ENCODE measurements at regions of chrX and their contacts with region 1.

Region 1: DNA sequence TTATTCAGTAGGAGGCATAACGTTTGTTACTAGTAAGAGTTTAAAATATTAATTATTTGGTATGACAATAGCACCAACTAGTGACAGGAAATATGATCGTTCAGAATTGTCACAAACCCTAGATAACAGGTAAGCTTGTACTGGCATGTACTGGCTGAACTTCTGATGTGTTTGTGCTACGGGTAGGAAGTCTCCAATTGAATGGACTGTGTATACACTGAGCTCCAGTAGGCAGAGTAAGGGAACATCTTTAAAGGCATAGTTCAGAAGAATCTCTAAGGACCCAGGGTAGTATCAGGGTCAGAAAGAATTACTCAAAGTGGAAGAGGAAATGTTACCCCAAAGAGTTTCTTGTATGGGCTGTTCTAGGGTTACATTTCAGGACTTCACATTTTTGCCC is 230.4 kb downstream of the EDA2R start:
- DNase-seq: no peak
- H3K4me3 Mint-ChIP-seq: no peak overlapping the region
- H3K27ac Mint-ChIP-seq: no peak overlapping the region
- H3K4me1 Mint-ChIP-seq: peaks cover 2% of the 10 kb centered on the region
- H3K27me3 Mint-ChIP-seq: no peaks in the 10 kb centered on the region

Region 2: DNA sequence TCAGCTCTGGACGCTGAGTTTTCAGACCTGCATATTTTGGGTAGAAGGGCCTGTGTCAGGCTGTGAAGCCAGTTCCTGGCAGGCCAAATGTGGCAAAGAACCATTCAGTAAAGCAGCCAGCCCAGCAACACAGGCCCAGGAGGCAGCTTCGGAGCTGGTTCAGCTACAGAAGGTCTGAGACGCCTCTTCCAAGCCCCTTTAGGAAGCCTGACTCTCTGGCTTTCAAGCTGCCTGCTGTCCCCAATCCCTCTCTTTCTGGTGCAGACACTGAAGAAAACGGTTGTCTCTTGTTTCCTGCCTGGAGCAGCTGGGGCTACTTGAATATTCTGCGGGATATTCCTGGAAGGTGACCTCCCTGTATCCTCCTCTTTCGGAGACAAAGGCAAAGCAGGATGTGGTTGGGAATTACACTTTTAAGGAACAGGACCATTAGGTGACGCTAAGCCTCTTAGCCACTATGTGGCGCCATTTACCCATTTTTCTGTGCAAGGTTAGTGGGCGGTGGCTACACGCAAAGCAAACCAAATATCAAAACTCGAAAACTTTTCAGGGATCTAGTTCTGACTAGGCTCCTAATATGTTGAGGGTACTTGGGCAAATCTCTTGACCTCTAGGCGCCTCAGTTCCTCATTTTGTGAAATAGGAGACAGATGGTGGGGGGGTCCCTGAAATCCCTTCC is 826.7 kb before region 1 on chrX:
- CTCF ChIA-PET with region 1: interaction called, 3 read pairs
- intact Hi-C with region 1: loop called (anchors 1 kb)
- DNase-seq: peak; percentile 69
- H3K4me3 Mint-ChIP-seq: no peak overlapping the region
- H3K27ac Mint-ChIP-seq: no peak overlapping the region
- H3K4me1 Mint-ChIP-seq: peaks cover 6% of the 10 kb centered on the region
- H3K27me3 Mint-ChIP-seq: no peaks in the 10 kb centered on the region

Region 3: DNA sequence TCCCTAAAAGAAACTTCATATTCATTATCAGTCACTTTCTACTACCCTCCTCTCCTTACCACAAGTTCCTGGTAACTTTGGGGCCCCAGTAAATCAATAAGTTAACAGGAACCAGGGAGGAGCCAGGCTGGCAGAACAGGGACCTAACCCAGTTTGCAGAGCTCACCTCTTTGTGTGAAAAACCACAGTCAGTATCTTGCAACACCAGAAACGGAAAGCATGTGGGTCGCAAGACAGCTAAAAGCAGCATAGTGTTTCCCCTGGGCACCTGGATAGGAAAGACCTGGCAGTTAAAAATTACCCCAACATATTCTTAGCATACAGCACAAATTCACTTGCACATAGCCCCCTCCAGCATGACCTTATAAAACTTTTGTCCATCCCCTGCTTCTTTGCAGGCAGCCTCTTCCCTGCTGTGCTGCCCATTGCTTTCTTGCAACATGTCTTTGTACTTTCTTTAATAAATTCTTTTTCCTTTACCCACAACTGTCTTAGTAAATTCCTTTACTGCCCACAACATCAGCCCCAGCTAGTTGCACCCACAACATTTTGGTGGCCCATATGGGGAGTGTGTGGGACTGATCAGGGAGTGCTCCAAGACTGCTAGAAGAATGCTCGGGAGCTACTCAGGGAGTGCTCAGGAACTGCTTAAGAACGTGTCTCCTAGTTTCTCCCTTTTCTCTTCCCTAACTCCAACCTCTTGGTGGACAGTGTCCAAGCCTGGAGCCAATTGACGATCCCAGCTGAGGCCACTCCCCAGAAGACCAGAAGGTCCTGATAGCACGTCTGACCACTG is 657.6 kb before region 1 on chrX:
- CTCF ChIA-PET with region 1: no interaction called
- intact Hi-C with region 1: loop called (anchors 5 kb)
- DNase-seq: peak; percentile 60
- H3K4me3 Mint-ChIP-seq: peak overlapping the region; percentile 4
- H3K27ac Mint-ChIP-seq: peak overlapping the region; percentile 30
- H3K4me1 Mint-ChIP-seq: peaks cover 56% of the 10 kb centered on the region
- H3K27me3 Mint-ChIP-seq: no peaks in the 10 kb centered on the region

Region 4: DNA sequence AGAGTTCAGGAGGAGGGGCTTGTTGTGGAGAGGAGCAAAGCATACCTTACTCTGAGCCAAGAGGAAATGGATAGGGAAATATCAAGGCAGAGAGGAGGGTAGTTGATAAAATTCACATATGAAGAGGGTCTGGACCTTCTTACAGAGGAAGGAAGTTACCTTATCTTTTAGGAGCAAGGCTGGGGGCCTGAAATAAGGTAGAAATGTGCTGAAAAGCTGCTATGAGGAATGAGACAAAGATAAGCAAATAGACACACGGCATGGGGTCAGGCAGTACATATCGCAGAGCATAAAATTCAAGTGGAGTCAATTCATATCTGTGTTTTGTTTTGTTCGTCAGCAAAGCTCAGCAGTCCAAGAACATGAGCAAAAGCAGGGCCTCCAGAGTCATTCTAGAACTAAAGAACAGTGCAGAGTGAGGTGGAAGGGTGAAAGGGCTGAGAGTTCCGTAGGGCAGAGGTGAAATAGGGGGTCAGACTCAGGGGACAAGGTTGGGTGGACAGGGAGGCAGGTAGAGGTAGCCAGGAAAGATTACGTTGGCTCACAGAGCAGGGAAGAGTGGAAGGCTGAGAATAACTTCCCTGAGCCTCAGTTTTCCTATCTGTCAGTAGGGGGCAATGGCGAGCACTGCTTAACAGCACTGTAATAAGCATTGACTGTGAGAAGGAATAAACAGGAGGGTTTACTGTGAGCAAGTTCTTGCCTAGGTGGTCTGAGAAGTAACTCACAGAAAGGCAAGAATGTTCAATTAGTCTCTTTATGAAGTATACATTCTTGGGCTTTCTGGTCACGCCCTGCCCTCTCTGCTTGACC is 377.8 kb before region 1 on chrX:
- CTCF ChIA-PET with region 1: no interaction called
- intact Hi-C with region 1: loop called (anchors 5 kb)
- DNase-seq: peak; percentile 37
- H3K4me3 Mint-ChIP-seq: no peak overlapping the region
- H3K27ac Mint-ChIP-seq: no peak overlapping the region
- H3K4me1 Mint-ChIP-seq: peaks cover 5% of the 10 kb centered on the region
- H3K27me3 Mint-ChIP-seq: no peaks in the 10 kb centered on the region

Region 5: DNA sequence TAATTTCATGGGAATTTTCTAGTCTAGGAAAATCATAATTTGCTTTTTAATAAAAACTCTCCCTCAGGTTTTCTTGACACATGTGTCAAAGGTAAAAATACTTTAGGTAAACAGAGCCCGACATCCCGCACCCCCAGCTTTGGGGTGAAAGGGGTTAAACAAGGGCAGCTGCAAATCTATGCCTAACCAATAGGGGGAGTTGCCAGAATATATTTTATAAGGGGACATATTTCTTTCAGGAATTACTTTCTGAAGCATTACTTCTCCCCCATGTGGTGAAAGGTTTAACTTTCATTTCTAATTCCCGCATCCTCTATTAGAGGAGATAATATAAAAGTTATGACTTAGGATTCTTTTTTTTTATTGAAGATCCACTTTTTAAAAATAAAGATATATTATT is 298.4 kb before region 1 on chrX:
- CTCF ChIA-PET with region 1: no interaction called
- intact Hi-C with region 1: loop called (anchors 10 kb)
- DNase-seq: peak; percentile 8
- H3K4me3 Mint-ChIP-seq: no peak overlapping the region
- H3K27ac Mint-ChIP-seq: no peak overlapping the region
- H3K4me1 Mint-ChIP-seq: peaks cover 7% of the 10 kb centered on the region
- H3K27me3 Mint-ChIP-seq: no peaks in the 10 kb centered on the region

Region 6: DNA sequence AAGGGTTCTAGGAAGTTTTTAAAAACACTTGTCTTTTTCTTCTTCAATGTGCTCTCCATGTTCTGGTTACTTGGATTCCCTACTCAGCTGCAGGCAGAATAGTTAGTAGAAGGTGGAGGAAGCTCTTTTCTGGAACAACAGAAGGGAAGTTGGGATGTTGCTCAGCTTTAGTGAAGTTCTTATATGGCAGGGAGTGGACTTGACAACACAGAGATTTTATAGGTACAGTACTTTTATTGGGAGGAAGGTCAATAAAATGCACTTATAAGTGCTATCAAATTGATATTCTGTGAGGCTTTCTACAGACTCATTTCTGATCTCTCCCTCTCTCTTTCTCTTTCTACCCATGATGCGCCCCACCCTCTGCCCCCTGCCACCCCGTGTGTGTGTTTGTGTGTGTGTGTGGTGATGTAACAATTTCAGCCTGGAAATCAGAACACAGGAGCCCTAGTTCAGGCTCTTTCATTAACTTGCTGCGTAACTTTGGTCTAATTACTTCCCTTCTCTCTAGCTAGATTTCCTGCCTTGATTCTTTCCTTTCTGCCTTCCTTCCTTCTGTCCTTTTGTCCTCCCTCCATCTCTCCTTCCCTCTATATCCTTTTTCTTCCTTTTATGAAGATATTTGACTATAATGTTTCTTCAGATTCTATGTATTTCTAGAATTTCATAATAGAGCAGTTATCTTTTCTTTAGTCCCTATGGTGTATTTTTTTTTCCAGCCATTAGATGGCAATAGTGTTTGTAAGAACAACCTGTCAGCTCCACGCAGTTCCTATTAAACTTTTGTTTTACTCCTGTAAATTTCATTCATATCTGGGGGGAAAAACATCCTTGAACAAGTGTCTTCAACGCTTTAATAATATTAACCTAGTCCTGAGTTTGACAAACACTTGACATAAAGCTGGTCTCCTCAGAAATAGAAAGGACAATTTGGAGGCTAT is 207.4 kb before region 1 on chrX:
- CTCF ChIA-PET with region 1: interaction called, 5 read pairs
- intact Hi-C with region 1: loop called (anchors 1 kb)
- DNase-seq: no peak
- H3K4me3 Mint-ChIP-seq: no peak overlapping the region
- H3K27ac Mint-ChIP-seq: no peak overlapping the region
- H3K4me1 Mint-ChIP-seq: peaks cover 28% of the 10 kb centered on the region
- H3K27me3 Mint-ChIP-seq: no peaks in the 10 kb centered on the region

Region 7: GRCh38 chrX:66544181-66544580 is 135.7 kb after region 1 on chrX:
- CTCF ChIA-PET with region 1: no interaction called
- intact Hi-C with region 1: no loop called
- DNase-seq: no peak
- H3K4me3 Mint-ChIP-seq: no peak overlapping the region
- H3K27ac Mint-ChIP-seq: no peak overlapping the region
- H3K4me1 Mint-ChIP-seq: no peaks in the 10 kb centered on the region
- H3K27me3 Mint-ChIP-seq: no peaks in the 10 kb centered on the region

Region 8: DNA sequence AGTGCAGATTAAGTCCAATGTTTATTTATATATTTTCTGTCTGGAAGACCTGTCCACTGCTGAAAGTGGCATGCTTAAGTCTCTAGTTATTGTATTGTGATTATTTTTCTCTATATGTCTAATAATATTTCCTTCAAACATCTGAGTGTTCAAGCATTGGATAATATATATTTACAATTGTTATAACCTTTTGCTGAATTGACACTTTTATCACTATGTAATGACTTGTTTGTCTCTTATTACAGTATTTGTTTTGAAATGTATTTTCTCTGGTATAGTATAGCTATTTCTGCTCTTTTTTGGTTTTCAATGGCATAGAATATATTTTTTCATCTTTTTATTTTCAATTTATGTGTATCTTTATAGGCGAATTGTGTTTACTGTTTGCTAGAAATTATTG is 170.7 kb after region 1 on chrX:
- CTCF ChIA-PET with region 1: no interaction called
- intact Hi-C with region 1: no loop called
- DNase-seq: no peak
- H3K4me3 Mint-ChIP-seq: no peak overlapping the region
- H3K27ac Mint-ChIP-seq: no peak overlapping the region
- H3K4me1 Mint-ChIP-seq: no peaks in the 10 kb centered on the region
- H3K27me3 Mint-ChIP-seq: no peaks in the 10 kb centered on the region

Region 9: GRCh38 chrX:66872771-66873170 is 464.3 kb after region 1 on chrX:
- CTCF ChIA-PET with region 1: no interaction called
- intact Hi-C with region 1: no loop called
- DNase-seq: no peak
- H3K4me3 Mint-ChIP-seq: no peak overlapping the region
- H3K27ac Mint-ChIP-seq: no peak overlapping the region
- H3K4me1 Mint-ChIP-seq: no peaks in the 10 kb centered on the region
- H3K27me3 Mint-ChIP-seq: no peaks in the 10 kb centered on the region